Activated B cell treated with CpG ODN at 0.5 μM for 24 hours (primary cell): ENCODE measurements at regions of chr2 and their contacts with region 1.

Region 1: GRCh38 chr2:233053928-233054784 is 6.0 kb upstream of the INPP5D start:
- DNase-seq: peak; percentile 72
- ATAC-seq: peak; percentile 74
- H3K4me3 Mint-ChIP-seq: no peak overlapping the region
- H3K27ac Mint-ChIP-seq: peak overlapping the region; percentile 32
- H3K4me1 Mint-ChIP-seq: peaks cover 16% of the 10 kb centered on the region
- H3K27me3 Mint-ChIP-seq: peaks cover 3% of the 10 kb centered on the region
- CTCF ChIP-seq: peak; percentile 65

Region 2: DNA sequence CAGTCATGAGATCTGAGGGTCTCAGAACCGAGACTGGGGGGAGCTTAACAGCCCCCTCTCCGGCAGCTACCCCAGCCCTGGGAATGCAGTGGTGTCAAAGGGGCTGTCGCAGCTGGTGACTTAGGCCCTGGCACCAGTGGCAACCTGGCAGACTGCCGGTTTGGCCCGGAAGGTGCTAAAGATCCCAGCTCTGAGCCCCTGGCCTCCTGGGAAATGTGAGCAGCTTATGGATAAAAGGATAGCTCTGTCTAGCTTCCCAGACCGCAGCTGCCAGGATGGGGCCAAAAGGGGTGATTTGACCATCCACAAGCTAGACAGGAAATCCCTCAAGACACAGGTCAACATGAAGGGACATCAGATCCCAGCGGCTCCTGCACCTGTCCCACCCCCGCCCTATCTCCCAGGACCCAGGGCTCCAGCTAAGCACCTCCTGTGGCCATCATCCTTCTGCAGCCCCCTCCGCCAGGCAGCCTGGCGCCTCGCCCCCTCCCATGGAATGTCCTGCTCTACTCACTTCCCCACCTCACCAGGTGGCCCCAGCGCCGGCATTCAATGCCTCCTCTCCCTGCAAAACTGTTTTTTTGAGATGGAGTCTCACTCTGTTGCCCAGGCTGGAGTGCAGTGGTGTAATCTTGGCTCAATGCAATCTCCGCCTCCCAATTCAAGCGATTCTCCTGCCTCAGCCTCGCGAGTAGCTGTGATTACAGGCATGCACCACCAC is 453.9 kb before region 1 on chr2:
- CTCF ChIA-PET with region 1: no interaction called
- POLR2A ChIA-PET with region 1: no interaction called
- intact Hi-C with region 1: loop called (anchors 10 kb)
- DNase-seq: no peak
- ATAC-seq: no peak
- H3K4me3 Mint-ChIP-seq: no peak overlapping the region
- H3K27ac Mint-ChIP-seq: no peak overlapping the region
- H3K4me1 Mint-ChIP-seq: no peaks in the 10 kb centered on the region
- H3K27me3 Mint-ChIP-seq: peaks cover 2% of the 10 kb centered on the region
- CTCF ChIP-seq: no peak

Region 3: DNA sequence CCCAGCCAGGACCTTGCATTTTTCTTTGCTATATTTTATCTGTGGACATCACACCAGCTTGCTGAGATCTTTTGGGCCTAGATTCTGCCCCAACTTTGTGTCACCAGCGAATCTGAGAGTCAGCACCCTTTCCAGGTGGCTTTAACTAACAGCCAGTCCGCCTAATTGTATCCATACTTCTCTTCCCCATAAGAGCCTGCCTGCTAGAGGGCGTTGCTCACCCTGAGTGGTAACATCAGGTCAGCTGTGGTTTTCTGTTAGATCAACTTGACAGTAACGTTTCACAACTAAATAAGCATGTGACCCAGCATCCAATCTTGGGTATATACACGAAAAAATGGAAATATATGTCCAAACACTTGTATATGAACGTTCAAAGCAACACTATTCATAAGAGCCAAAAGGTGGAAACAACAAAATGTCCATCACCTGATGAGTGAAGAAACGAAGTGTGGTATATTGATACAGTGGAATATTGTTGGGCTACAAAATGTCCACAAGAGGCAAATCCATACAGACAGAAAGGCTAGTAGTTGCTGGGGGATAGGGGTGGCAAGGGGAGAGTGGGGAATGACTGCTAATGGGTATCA is 395.9 kb before region 1 on chr2:
- CTCF ChIA-PET with region 1: no interaction called
- POLR2A ChIA-PET with region 1: no interaction called
- intact Hi-C with region 1: no loop called
- DNase-seq: no peak
- ATAC-seq: no peak
- H3K4me3 Mint-ChIP-seq: no peak overlapping the region
- H3K27ac Mint-ChIP-seq: no peak overlapping the region
- H3K4me1 Mint-ChIP-seq: no peaks in the 10 kb centered on the region
- H3K27me3 Mint-ChIP-seq: peaks cover 12% of the 10 kb centered on the region
- CTCF ChIP-seq: no peak